Naive thymus-derived CD4-positive, alpha-beta T cell (primary cell): ENCODE measurements at regions of chr1 and their contacts with region 1.

Region 1: DNA sequence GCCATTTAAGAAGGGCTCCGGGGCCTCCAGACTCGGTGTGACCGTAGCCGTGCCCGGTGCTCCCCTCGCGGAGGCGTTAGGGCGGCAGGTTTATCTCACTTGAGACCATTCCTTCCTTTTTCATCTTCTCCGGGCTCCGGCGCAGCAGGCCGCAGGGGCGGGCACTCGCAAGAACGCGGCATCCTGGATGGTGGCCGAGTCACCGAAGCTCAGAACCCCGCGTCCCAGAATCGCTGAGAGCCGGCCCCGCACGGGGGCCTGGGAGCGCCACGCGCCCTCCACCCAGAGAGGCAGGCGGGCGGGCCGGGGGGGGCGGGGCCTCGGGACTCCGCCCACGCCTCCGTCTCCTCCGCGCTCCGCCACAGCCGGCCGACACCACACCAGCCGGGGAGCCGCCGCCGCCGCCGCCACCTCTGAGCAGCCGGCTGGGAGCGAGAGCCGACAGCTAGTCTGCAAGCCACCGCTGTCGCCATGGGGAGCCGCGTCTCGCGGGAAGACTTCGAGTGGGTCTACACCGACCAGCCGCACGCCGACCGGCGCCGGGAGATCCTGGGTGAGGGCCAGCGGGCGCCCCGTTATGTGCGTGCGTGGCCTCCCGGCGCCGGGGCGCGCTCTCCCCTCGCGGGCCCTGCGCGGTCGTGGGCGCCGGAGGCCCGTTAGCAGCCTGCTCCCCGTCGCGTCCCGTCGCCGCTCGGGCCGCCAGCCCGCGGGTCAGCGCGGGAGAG is at the start of gene DEGS1:
- DNase-seq: peak; percentile 77 to 86 (median 84)
- ATAC-seq: peak; percentile 91
- H3K4me3 ChIP-seq: peak within 1 kb of the TSS; percentile 76
- H3K4me3 Mint-ChIP-seq: peak within 1 kb of the TSS; percentile 78 to 95 (median 90)
- H3K27ac ChIP-seq: peak within 1 kb of the TSS; percentile 92
- H3K27ac Mint-ChIP-seq: peak within 1 kb of the TSS; percentile 90 to 96 (median 93)
- H3K4me1 ChIP-seq: peaks cover 20 to 28% of the 10 kb centered on the region in 2 donors
- H3K4me1 Mint-ChIP-seq: peaks cover 35 to 56% (median 53%) of the 10 kb centered on the region in 7 donors
- H3K27me3 ChIP-seq: no peaks in the 10 kb centered on the region
- H3K27me3 Mint-ChIP-seq: no peaks in the 10 kb centered on the region
- total RNA-seq, gene DEGS1: 35.4 to 86.0 (median 38.3) TPM

Region 2: DNA sequence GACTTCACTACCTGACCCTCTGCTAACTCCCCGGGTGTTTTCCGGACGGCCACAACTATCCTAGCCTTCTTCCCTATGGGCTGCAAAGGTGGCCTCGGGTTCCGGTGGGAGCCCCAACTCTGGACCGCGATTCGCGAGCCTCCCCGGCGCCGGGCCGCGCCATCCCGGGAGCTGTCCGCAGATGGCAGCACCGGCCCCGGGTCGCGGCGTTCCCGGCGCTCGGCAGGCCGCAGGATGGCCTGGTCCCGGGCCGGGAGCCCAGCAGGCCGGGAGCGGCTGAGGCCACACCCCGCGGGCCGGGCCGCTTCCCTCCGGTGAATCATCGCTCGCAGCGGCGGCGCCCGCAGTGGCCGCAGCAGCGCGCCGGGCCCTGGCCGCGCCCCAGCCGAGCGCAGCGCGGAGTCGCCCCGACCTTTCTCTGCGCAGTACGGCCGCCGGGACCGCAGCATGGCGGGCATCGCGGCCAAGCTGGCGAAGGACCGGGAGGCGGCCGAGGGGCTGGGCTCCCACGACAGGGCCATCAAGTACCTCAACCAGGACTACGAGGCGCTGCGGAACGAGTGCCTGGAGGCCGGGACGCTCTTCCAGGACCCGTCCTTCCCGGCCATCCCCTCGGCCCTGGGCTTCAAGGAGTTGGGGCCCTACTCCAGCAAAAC is 470.7 kb before region 1 on chr1 and contains the start of gene CAPN2:
- CTCF ChIA-PET with region 1: no interaction called
- POLR2A ChIA-PET with region 1: interaction called, 3 read pairs
- intact Hi-C with region 1: loop called in 1 of 2 experiments (anchors 10 kb)
- DNase-seq: peak; percentile 29 to 78 (median 51)
- ATAC-seq: peak; percentile 78
- H3K4me3 ChIP-seq: peak within 1 kb of the TSS; percentile 61
- H3K4me3 Mint-ChIP-seq: peak within 1 kb of the TSS; percentile 70 to 93 (median 84)
- H3K27ac ChIP-seq: peak within 1 kb of the TSS; percentile 83
- H3K27ac Mint-ChIP-seq: peak within 1 kb of the TSS; percentile 82 to 93 (median 88)
- H3K4me1 ChIP-seq: peaks cover 48 to 53% of the 10 kb centered on the region in 2 donors
- H3K4me1 Mint-ChIP-seq: peaks cover 52 to 69% (median 63%) of the 10 kb centered on the region in 7 donors
- H3K27me3 ChIP-seq: no peaks in the 10 kb centered on the region
- H3K27me3 Mint-ChIP-seq: peaks cover 0 to 8% (median 0%) of the 10 kb centered on the region in 5 donors
- total RNA-seq, gene CAPN2: 86.1 to 195 (median 117) TPM

Region 3: GRCh38 chr1:224149713-224150112 is 33.3 kb before region 1 on chr1:
- CTCF ChIA-PET with region 1: no interaction called
- POLR2A ChIA-PET with region 1: interaction called, 10 read pairs
- intact Hi-C with region 1: no loop called
- DNase-seq: no peak
- ATAC-seq: no peak
- H3K4me3 ChIP-seq: no peak overlapping the region
- H3K4me3 Mint-ChIP-seq: no peak overlapping the region
- H3K27ac ChIP-seq: no peak overlapping the region
- H3K27ac Mint-ChIP-seq: peak overlapping the region in 2 of 9 donors; percentile 1 to 50
- H3K4me1 ChIP-seq: peaks cover 0 to 4% of the 10 kb centered on the region in 2 donors
- H3K4me1 Mint-ChIP-seq: peaks cover 12 to 21% (median 18%) of the 10 kb centered on the region in 7 donors
- H3K27me3 ChIP-seq: no peaks in the 10 kb centered on the region
- H3K27me3 Mint-ChIP-seq: no peaks in the 10 kb centered on the region

Region 4: DNA sequence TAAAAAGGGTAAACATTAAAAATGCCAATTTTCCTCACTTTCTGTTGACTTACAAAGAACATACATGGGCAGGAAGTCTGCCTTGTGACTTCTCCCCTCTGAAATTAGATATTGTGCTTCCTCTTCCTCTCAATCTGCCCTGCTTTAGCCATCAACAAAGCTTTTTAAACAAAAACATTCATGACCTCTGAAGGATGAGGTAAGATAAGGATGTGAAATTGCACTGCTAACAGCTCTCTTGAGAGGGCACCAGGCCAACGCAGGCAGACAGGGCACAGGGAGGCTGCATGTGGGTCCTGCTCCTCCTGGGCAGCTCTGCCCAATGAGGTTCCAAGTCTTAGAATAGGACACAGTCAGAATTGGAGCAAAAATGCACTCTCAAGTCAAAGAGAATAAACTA is 62.2 kb after region 1 on chr1:
- CTCF ChIA-PET with region 1: no interaction called
- POLR2A ChIA-PET with region 1: interaction called, 9 read pairs
- intact Hi-C with region 1: loop called (anchors 2 to 5 kb)
- DNase-seq: peak in 6 of 9 donors; percentile 17 to 62 (median 47)
- ATAC-seq: peak; percentile 85
- H3K4me3 ChIP-seq: no peak overlapping the region
- H3K4me3 Mint-ChIP-seq: peak overlapping the region; percentile 53 to 79 (median 62)
- H3K27ac ChIP-seq: peak overlapping the region; percentile 48
- H3K27ac Mint-ChIP-seq: peak overlapping the region; percentile 85 to 97 (median 94)
- H3K4me1 ChIP-seq: peaks cover 10 to 20% of the 10 kb centered on the region in 2 donors
- H3K4me1 Mint-ChIP-seq: peaks cover 0 to 30% (median 29%) of the 10 kb centered on the region in 7 donors
- H3K27me3 ChIP-seq: no peaks in the 10 kb centered on the region
- H3K27me3 Mint-ChIP-seq: no peaks in the 10 kb centered on the region

Region 5: DNA sequence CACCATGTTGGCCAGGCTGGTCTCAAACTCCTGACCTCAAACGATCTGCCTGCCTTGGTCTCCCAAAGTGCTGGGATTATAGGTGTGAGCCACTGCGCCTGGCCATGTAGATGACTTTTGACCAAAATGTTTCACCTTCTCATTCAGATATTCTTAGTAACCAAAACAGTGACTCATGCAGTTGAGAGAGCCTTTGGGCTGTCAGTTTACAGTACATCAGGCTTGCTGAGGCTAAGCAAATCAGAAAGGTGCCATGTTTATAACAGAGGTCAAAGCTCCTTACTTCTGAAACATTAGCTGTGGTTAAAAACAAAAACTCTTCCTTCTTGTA is 194.6 kb after region 1 on chr1:
- CTCF ChIA-PET with region 1: no interaction called
- POLR2A ChIA-PET with region 1: no interaction called
- intact Hi-C with region 1: loop called in 1 of 2 experiments (anchors 5 kb)
- DNase-seq: no peak
- ATAC-seq: peak; percentile 46
- H3K4me3 ChIP-seq: no peak overlapping the region
- H3K4me3 Mint-ChIP-seq: peak overlapping the region; percentile 34 to 82 (median 64)
- H3K27ac ChIP-seq: no peak overlapping the region
- H3K27ac Mint-ChIP-seq: peak overlapping the region; percentile 53 to 93 (median 81)
- H3K4me1 ChIP-seq: peaks cover 74 to 76% of the 10 kb centered on the region in 2 donors
- H3K4me1 Mint-ChIP-seq: peaks cover 74 to 97% (median 92%) of the 10 kb centered on the region in 7 donors
- H3K27me3 ChIP-seq: no peaks in the 10 kb centered on the region
- H3K27me3 Mint-ChIP-seq: no peaks in the 10 kb centered on the region

Region 6: GRCh38 chr1:224411766-224412165 is 228.7 kb after region 1 on chr1:
- CTCF ChIA-PET with region 1: no interaction called
- POLR2A ChIA-PET with region 1: no interaction called
- intact Hi-C with region 1: no loop called
- DNase-seq: no peak
- ATAC-seq: peak; percentile 37
- H3K4me3 ChIP-seq: no peak overlapping the region
- H3K4me3 Mint-ChIP-seq: no peak overlapping the region
- H3K27ac ChIP-seq: no peak overlapping the region
- H3K27ac Mint-ChIP-seq: peak overlapping the region in 7 of 9 donors; percentile 15 to 72 (median 38)
- H3K4me1 ChIP-seq: no peaks in the 10 kb centered on the region
- H3K4me1 Mint-ChIP-seq: peaks cover 7 to 35% (median 15%) of the 10 kb centered on the region in 7 donors
- H3K27me3 ChIP-seq: no peaks in the 10 kb centered on the region
- H3K27me3 Mint-ChIP-seq: no peaks in the 10 kb centered on the region

Region 7: GRCh38 chr1:226034482-226034881 is 1851.5 kb after region 1 on chr1:
- CTCF ChIA-PET with region 1: no interaction called
- POLR2A ChIA-PET with region 1: no interaction called
- intact Hi-C with region 1: no loop called
- DNase-seq: peak in 1 of 9 donors; percentile 13
- ATAC-seq: peak; percentile 94
- H3K4me3 ChIP-seq: no peak overlapping the region
- H3K4me3 Mint-ChIP-seq: no peak overlapping the region
- H3K27ac ChIP-seq: no peak overlapping the region
- H3K27ac Mint-ChIP-seq: peak overlapping the region in 1 of 9 donors; percentile 45
- H3K4me1 ChIP-seq: no peaks in the 10 kb centered on the region
- H3K4me1 Mint-ChIP-seq: peaks cover 0 to 1% (median 0%) of the 10 kb centered on the region in 7 donors
- H3K27me3 ChIP-seq: no peaks in the 10 kb centered on the region
- H3K27me3 Mint-ChIP-seq: peaks cover 0 to 5% (median 0%) of the 10 kb centered on the region in 5 donors